Activated CD8-positive, alpha-beta T cell treated with anti-CD3 and anti-CD28 coated beads, Interleukin-2, amount 10 ng/mL, durations not matched to agents 7 days and 5 days (primary cell): ENCODE measurements at regions of chr19 and their contacts with region 1.

Region 1: DNA sequence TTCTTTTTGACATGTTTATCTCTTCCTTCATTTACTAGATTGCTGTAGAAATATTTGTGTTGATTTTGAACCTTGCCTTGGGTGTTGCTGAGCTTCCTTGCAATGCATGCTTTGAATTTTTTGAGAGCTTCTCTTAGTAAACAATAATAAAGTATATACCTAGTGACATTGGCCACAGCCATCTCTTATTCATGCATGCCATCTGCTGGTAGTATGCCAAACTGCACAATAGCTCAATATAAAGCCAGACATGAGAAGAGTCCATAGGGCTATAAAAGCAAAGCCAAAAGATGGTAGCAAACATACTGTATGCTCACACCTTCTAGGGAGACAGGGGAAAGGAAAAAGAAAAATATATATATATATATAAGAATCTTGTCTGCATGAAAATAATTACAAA is 18.9 kb upstream of the ZSCAN5A start:
- DNase-seq: peak; percentile 63
- ATAC-seq: peak; percentile 49
- H3K4me3 Mint-ChIP-seq: no peak overlapping the region
- H3K27ac Mint-ChIP-seq: no peak overlapping the region
- H3K4me1 Mint-ChIP-seq: no peaks in the 10 kb centered on the region
- H3K27me3 Mint-ChIP-seq: peaks cover 7% of the 10 kb centered on the region

Region 2: DNA sequence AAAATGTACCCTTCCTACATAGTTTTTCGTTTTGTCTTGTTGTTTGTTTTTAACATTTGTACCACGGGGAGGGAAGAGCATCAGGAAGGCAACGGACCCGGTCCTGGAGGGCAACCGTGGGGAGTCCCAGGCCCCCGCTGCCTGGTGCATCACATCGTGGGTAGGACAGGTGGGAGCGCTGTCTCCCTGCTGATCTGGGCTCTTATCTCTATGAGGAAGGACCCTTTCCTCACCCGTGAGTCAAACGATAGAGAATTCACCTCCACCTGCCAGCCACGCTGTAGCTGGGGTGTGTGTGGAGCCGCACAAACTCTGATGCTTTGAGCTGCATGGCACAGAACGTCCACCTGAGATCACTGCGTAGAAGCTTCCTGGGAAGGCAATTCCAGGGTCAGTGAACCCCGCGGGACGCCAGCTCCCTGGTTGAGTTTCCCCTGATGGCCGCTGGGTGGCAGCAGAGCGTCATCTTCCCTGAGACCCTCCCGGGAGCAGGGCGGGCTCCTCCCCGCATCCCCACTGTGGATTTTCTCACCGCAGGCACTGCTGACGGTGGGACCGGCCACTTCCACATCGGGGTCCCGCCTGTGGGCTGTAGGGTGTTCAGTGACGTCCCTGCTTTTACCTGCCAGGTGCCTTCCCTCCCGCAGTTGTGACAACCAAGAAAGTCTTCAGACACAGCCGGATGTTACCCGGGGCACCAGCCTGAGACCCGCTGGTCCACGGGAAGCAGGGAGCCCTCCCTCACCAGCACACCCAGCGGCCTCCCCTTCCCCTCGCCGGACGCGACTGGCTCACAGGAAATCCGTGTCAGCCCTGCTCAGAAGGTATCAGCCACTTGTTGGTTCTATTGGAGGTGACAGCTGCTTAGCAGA is 267.1 kb before region 1 on chr19:
- CTCF ChIA-PET with region 1: interaction called, 28 read pairs
- POLR2A ChIA-PET with region 1: no interaction called
- DNase-seq: peak; percentile 74
- ATAC-seq: peak; percentile 86
- H3K4me3 Mint-ChIP-seq: peak overlapping the region; percentile 64
- H3K27ac Mint-ChIP-seq: peak overlapping the region; percentile 47
- H3K4me1 Mint-ChIP-seq: peaks cover 12% of the 10 kb centered on the region
- H3K27me3 Mint-ChIP-seq: peaks cover 11% of the 10 kb centered on the region

Region 3: DNA sequence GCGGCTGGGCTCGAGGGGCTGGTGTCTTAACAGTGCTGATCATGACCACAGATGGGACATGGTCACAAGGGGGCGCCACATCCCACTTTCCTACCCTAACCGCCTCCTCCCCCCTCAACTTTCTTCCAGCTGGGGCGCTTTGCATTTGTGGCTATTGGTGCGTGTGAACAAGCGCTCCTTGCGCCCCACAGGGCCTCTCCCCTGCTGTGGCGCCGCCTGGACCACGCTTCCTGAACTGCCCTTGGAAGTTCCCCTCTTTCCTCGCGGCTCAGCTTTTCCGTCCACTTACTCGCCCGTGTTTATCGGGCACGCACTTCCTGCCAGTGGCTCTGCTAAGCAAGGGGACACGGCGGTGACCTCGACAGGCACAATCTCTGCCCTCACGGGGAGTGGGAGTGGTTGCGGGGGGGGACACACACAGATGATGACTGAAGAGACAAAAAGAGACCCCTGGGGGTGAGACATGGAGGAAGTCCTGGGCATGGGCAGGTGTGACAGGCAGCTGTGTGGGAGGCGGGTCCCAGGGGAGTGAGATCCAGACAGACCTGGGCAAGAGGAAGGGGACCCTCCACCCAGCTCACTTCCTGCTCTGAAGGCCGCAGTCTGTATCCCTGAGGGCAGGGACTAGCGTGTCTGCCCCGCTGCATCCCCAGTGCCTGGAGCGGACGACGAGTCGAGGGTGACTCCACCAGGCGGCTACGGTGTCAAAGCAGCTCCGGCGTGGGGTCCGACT is 252.7 kb before region 1 on chr19:
- CTCF ChIA-PET with region 1: interaction called, 23 read pairs
- POLR2A ChIA-PET with region 1: no interaction called
- DNase-seq: peak; percentile 80
- ATAC-seq: peak; percentile 71
- H3K4me3 Mint-ChIP-seq: peak overlapping the region; percentile 67
- H3K27ac Mint-ChIP-seq: no peak overlapping the region
- H3K4me1 Mint-ChIP-seq: peaks cover 10% of the 10 kb centered on the region
- H3K27me3 Mint-ChIP-seq: peaks cover 4% of the 10 kb centered on the region

Region 4: DNA sequence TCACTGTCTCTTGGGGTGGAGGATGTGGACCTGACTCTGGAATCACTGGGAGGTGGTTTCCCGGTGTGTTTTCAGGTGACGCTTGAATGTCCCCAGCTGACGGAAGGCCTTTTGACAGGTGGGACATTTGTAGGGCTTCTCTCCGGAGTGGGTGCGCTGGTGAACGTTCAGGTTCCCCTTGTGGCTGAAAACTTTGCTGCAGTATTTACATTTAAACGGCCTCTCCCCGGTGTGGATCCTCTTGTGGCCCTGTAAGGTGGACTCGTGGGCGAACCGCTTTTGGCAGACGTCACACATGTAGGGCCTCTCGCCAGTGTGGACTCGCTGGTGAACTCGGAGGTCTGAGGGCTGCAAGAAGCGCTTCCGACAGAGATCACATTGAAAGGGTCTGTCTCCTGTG is 143.7 kb before region 1 on chr19:
- CTCF ChIA-PET with region 1: no interaction called
- POLR2A ChIA-PET with region 1: no interaction called
- DNase-seq: no peak
- ATAC-seq: no peak
- H3K4me3 Mint-ChIP-seq: no peak overlapping the region
- H3K27ac Mint-ChIP-seq: no peak overlapping the region
- H3K4me1 Mint-ChIP-seq: peaks cover 6% of the 10 kb centered on the region
- H3K27me3 Mint-ChIP-seq: no peaks in the 10 kb centered on the region

Region 5: GRCh38 chr19:56252699-56253422 is 80.6 kb before region 1 on chr19:
- CTCF ChIA-PET with region 1: interaction called, 146 read pairs
- POLR2A ChIA-PET with region 1: no interaction called
- DNase-seq: peak; percentile 83
- ATAC-seq: peak; percentile 87
- H3K4me3 Mint-ChIP-seq: no peak overlapping the region
- H3K27ac Mint-ChIP-seq: peak overlapping the region; percentile 25
- H3K4me1 Mint-ChIP-seq: peaks cover 5% of the 10 kb centered on the region
- H3K27me3 Mint-ChIP-seq: no peaks in the 10 kb centered on the region

Region 6: GRCh38 chr19:56314562-56315077 is 18.9 kb before region 1 on chr19 and contains the start of gene ZSCAN5A:
- CTCF ChIA-PET with region 1: interaction called, 11 read pairs
- POLR2A ChIA-PET with region 1: no interaction called
- DNase-seq: peak; percentile 96
- ATAC-seq: peak; percentile 86
- H3K4me3 Mint-ChIP-seq: peak within 1 kb of the TSS; percentile 89
- H3K27ac Mint-ChIP-seq: peak within 1 kb of the TSS; percentile 98
- H3K4me1 Mint-ChIP-seq: peaks cover 27% of the 10 kb centered on the region
- H3K27me3 Mint-ChIP-seq: no peaks in the 10 kb centered on the region
- total RNA-seq, gene ZSCAN5A: 8.2 to 12.1 TPM

Region 7: DNA sequence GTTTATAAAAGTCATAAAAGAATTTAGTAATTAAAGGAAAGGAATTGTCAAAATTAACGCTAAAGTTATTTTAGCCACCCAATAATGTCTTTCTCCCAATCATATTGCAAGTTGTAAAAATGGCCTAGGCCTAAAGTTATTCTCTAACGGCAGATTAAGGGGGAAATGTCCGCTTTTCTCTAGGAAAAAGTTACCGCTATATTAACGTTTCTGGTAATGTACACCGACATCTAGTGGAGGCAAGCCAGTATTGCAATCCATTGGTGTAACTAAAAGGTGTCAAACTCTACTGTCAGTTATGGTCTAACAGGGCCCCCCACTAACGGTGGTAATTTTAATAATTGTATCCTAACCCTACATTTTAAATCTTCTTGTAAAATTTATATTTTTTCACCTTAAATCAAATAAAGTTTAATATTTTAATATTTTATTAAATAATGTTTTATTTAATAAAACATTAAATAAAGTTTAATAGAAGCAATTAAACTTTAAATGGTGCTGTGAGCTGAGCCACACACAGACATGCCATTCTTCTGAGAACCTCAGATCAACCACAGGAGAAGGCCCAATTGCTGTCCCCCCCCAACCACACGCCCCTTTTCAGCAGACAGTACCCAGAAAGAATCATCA is 17.0 kb after region 1 on chr19:
- CTCF ChIA-PET with region 1: interaction called, 15 read pairs
- POLR2A ChIA-PET with region 1: no interaction called
- DNase-seq: peak; percentile 70
- ATAC-seq: no peak
- H3K4me3 Mint-ChIP-seq: no peak overlapping the region
- H3K27ac Mint-ChIP-seq: no peak overlapping the region
- H3K4me1 Mint-ChIP-seq: no peaks in the 10 kb centered on the region
- H3K27me3 Mint-ChIP-seq: no peaks in the 10 kb centered on the region

Region 8: DNA sequence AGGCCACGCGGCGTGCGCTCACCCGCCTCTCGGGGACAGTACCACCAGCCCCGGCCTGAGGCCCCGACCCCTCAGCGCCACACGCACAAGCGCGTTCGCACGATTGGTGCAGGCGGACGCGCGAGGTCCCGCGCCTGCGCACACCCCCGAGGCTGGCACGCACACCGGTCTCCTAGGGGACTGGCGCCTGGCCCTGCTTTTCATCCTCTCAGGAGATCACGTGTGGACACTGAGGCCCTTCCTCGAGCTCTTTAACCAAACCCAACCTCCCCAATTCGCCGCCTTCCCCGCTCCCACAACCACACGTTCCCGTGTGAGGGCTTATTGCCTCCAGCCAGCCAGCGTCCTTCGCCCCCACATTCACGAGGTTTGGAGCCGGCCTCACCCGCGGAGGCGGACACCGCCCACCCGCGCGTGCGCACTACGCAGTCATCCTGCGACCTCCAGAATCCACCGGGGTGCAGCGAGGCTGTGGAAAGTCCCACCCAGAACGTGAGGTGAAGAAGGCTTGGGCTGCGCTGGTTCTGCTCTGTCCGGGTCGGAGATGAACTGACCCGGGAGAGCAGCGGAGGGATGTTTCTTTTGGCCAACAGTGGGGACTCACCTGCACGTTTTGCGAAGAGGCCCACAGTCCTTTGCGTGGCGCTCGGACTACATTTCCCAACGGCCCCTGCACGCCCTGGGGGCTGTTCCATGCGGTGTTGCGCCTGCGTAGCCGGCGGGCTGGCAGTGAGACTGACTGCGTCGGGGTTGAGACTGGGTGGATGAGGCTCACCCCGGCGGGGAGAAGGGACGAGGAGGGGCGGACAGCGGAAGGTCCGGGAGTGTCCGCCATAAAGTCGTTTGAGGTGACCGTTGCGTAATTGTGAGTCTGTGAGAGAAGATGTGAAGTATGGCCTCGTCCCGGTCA is 144.2 kb after region 1 on chr19:
- CTCF ChIA-PET with region 1: no interaction called
- POLR2A ChIA-PET with region 1: no interaction called
- DNase-seq: peak; percentile 82
- ATAC-seq: peak; percentile 87
- H3K4me3 Mint-ChIP-seq: peak overlapping the region; percentile 95
- H3K27ac Mint-ChIP-seq: peak overlapping the region; percentile 95
- H3K4me1 Mint-ChIP-seq: peaks cover 22% of the 10 kb centered on the region
- H3K27me3 Mint-ChIP-seq: peaks cover 7% of the 10 kb centered on the region